Right cardiac atrium (tissue), 5 donors: ENCODE measurements at regions of chr22 and their contacts with region 1.

Region 1: DNA sequence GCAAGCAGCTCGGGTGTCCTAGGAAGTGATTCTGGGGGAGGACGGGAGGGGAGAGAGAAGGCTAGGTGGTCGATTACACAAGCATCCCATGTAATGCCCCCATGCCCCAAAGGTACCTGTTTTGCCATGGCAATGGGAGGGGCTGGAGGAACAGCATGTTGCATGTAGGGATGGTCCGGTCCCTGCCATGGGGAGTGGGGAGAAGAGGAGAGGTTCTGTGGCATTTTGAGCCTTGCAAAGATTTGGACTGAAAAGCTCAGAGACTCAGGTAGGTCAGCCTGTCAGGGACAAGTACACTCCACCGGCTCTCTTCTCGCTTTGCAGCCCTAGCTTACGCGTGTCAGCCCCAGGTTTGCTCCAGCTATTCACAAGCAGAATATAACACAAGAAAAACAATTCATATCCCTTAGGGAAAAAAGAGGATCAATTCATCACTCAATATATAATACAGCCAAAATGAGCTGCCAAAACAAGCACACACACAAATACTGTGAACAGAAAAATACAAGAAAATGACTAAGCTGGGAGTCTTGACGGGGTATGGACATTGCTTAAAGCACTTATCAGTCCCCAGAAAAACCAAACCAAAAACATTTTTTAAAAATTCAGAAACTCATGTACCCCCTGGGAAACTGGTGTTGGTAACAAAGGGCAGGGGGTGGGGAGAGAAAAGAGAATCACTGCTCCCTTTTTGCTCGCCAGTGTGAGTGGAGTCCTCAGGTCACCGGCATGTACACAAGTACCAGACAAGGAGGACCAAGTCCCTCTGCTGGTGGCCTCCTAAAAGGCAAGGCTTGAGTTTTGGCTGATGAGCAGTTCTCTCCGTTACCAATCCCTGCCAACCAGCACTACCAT is 21.6 kb downstream of the APOL5 start:
- DNase-seq: peak in 1 of 3 donors; percentile 61
- ATAC-seq: peak; percentile 36 to 57
- H3K4me3 ChIP-seq: no peak overlapping the region
- H3K27ac ChIP-seq: no peak overlapping the region
- H3K4me1 ChIP-seq: peaks cover 16% of the 10 kb centered on the region
- H3K27me3 ChIP-seq: no peaks in the 10 kb centered on the region

Region 2: DNA sequence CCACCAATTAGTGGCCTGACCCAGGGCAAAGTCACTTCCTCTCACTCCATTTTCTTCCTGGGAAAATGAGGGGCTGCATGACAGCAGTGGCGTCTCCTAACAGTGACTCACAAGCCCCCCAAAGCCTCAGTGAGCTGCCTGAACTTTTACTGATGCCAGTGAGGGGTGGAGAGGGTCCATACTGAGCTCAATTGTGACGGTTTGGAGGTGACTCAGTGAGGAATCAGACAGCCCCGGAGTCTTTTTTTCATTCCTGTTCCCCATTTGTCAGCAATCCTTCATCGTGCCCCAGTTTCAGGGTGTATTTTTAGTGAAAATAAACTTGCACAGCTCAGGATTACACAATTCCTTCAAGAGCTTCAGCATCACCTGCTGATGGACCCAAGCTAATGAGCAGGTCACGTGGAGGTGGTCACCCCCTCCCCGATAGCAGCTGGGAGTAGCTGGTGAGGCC is 228.8 kb before region 1 on chr22:
- intact Hi-C with region 1: no loop called
- DNase-seq: no peak
- ATAC-seq: no peak
- H3K4me3 ChIP-seq: no peak overlapping the region
- H3K27ac ChIP-seq: no peak overlapping the region
- H3K4me1 ChIP-seq: no peaks in the 10 kb centered on the region
- H3K27me3 ChIP-seq: no peaks in the 10 kb centered on the region

Region 3: GRCh38 chr22:35582861-35583670 is 156.2 kb before region 1 on chr22:
- intact Hi-C with region 1: no loop called
- DNase-seq: peak; percentile 45 to 79 (median 77)
- ATAC-seq: peak in 1 of 2 donors; percentile 58
- H3K4me3 ChIP-seq: no peak overlapping the region
- H3K27ac ChIP-seq: no peak overlapping the region
- H3K4me1 ChIP-seq: peaks cover 3% of the 10 kb centered on the region
- H3K27me3 ChIP-seq: no peaks in the 10 kb centered on the region

Region 4: GRCh38 chr22:35674335-35674734 is 65.0 kb before region 1 on chr22:
- intact Hi-C with region 1: no loop called
- DNase-seq: no peak
- ATAC-seq: no peak
- H3K4me3 ChIP-seq: no peak overlapping the region
- H3K27ac ChIP-seq: no peak overlapping the region
- H3K4me1 ChIP-seq: no peaks in the 10 kb centered on the region
- H3K27me3 ChIP-seq: no peaks in the 10 kb centered on the region

Region 5: DNA sequence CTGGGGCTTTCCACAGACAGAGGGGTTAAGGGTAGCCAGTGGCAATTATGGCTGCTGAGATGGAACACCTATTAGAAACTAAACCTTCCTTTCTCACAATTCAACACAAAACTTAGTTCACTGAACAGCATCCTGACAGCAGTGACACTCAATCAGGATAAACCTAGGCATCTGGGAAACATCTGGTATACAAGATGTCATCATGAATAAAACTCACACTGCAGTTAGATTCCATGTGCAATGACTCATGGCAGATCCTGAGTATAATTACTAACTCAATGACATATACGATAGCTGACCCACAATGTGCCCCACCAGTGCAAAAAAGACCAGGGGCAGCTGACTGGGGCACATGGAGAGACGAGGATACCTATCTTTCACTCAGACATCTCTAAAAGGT is 271.6 kb after region 1 on chr22:
- intact Hi-C with region 1: no loop called
- DNase-seq: no peak
- ATAC-seq: peak; percentile 12 to 53
- H3K4me3 ChIP-seq: no peak overlapping the region
- H3K27ac ChIP-seq: no peak overlapping the region
- H3K4me1 ChIP-seq: peaks cover 11% of the 10 kb centered on the region
- H3K27me3 ChIP-seq: no peaks in the 10 kb centered on the region

Region 6: DNA sequence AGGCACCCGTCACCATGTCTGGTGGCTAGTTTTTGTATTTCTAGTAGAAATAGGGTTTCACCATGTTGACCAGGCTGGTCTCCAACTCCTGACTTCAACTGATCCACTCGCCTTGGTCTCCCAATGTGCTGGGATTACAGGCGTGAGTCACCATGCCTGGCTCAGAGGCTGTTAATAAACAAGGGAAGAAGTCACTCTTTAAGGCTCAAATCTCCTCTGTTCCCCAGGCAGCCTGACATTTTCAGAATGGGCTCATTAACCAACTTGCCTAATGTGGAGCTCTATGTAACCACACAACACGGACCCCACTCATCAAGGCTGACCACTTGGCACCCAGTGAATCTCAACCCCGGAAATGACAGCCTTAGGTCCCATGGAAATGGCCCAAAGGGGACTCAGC is 397.2 kb after region 1 on chr22:
- intact Hi-C with region 1: loop called in 1 of 4 experiments (anchors 10 kb)
- DNase-seq: peak in 1 of 3 donors; percentile 73
- ATAC-seq: peak; percentile 40 to 56
- H3K4me3 ChIP-seq: no peak overlapping the region
- H3K27ac ChIP-seq: peak overlapping the region; percentile 70
- H3K4me1 ChIP-seq: no peaks in the 10 kb centered on the region
- H3K27me3 ChIP-seq: no peaks in the 10 kb centered on the region